ENCODE measurements at regions of chr1 and their contacts with region 1.

Region 1: DNA sequence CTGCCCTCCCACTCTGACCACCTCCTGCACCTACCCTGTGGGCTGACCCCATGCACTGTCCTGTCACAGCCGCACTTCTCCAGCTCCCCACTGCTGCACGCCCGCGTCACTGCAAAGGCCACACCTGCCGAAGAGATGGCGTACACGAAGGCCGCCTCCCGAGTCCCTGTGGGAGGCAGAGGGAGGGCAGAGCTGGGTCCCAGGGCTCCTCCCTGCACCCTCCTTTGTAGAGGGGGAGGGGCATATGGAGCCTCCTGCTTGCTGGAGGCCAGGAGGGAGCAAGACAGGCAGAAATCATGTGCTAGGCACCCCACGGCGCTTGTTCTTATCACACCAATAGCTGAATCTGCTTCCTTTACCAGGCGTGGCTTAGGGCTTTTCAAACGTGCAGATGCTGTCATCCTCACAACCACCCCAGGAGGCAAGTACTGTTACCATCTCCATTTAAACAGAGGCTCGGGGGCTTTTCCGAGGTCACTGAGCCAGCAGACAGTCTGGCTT is 21.4 kb downstream of the WNT4 start:
- DNase-seq: no peak
- H3K4me3 ChIP-seq: no peak overlapping the region
- H3K27ac ChIP-seq: no peak overlapping the region
- H3K4me1 ChIP-seq: peaks cover 15 to 73% (median 16%) of the 10 kb centered on the region in 3 donors
- H3K27me3 ChIP-seq: no peaks in the 10 kb centered on the region
- CTCF ChIP-seq: no peak
- POLR2A ChIP-seq: no peak

Region 2: DNA sequence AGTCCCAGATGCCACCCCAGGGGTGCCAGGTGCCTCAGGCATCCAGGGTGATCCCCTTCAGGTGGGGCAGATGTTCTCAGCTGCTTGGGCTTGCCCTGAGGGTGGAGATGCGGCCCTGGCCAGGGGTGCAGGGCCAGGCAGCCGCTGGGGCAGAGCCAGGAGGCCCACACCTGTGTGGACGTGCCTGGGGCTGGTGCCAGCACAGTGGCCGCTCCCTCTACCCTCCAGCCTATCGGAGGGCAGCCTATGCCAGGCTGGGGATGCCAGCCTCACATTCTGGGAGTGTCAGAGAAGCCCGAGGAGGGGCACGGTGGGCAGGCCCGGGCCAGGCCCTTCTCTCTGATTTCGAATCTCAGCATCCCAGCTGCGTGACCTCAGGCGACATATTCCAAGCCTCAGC is 117.9 kb after region 1 on chr1:
- intact Hi-C with region 1: no loop called
- DNase-seq: no peak
- H3K4me3 ChIP-seq: no peak overlapping the region
- H3K27ac ChIP-seq: peak overlapping the region; percentile 49 to 77 (median 57)
- H3K4me1 ChIP-seq: peaks cover 15 to 59% (median 28%) of the 10 kb centered on the region in 3 donors
- H3K27me3 ChIP-seq: peaks cover 0 to 13% (median 0%) of the 10 kb centered on the region in 4 donors
- CTCF ChIP-seq: no peak
- POLR2A ChIP-seq: no peak

Region 3: DNA sequence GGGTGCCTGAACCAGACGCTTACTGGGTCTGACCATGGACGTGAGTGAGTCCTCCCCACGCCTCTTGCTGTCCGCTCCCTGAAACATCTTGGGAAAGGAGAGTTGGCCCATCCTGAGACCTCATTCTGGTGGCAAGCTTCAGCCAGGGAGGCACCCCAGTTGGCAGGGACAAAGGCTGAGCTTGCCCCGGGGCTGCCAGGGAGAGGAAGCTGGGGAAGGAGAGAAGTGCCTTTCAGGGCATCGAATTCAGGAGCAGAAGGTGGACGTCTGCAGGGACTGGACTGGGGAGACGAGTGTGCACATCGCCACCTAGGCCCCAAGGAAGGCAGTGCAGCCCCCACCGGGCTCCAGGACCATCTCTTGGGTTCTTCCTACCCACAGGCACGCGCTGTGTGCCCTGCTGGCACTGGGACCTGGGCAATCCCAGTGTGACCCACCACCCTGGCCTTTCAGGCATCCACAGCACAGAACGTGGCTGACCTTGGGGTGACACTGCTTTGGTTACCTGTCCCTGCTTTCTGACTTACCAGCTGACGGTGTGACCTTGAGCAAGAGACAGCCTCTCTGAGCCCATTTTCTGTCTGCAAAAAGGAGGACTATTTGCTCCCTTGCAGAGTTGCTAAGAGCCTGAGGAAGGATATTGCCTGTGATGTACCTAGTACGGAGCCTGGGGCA is 154.4 kb after region 1 on chr1:
- intact Hi-C with region 1: loop called (anchors 10 kb)
- DNase-seq: no peak
- H3K4me3 ChIP-seq: no peak overlapping the region
- H3K27ac ChIP-seq: no peak overlapping the region
- H3K4me1 ChIP-seq: peaks cover 4 to 32% (median 5%) of the 10 kb centered on the region in 3 donors
- H3K27me3 ChIP-seq: peaks cover 0 to 11% (median 0%) of the 10 kb centered on the region in 4 donors
- CTCF ChIP-seq: peak; percentile 38 to 83 (median 76)
- POLR2A ChIP-seq: no peak

Measured in esophagus squamous epithelium (tissue), 5 donors.